Aorta (tissue), 5 donors: ENCODE measurements at regions of chr20 and their contacts with region 1.

Region 1: GRCh38 chr20:19552134-19552835 is 205.8 kb upstream of the RIN2 start:
- DNase-seq: peak; percentile 72 to 79
- ATAC-seq: peak; percentile 70
- H3K4me3 ChIP-seq: no peak overlapping the region
- H3K27ac ChIP-seq: peak overlapping the region in 1 of 2 donors; percentile 85
- H3K4me1 ChIP-seq: peaks cover 2 to 11% of the 10 kb centered on the region in 2 donors
- H3K27me3 ChIP-seq: no peaks in the 10 kb centered on the region

Region 2: GRCh38 chr20:19449051-19449450 is 103.2 kb before region 1 on chr20:
- intact Hi-C with region 1: loop called in 1 of 2 experiments (anchors 10 kb)
- DNase-seq: peak; percentile 71 to 89
- ATAC-seq: peak; percentile 5
- H3K4me3 ChIP-seq: no peak overlapping the region
- H3K27ac ChIP-seq: no peak overlapping the region
- H3K4me1 ChIP-seq: peaks cover 3 to 5% of the 10 kb centered on the region in 2 donors
- H3K27me3 ChIP-seq: no peaks in the 10 kb centered on the region

Region 3: DNA sequence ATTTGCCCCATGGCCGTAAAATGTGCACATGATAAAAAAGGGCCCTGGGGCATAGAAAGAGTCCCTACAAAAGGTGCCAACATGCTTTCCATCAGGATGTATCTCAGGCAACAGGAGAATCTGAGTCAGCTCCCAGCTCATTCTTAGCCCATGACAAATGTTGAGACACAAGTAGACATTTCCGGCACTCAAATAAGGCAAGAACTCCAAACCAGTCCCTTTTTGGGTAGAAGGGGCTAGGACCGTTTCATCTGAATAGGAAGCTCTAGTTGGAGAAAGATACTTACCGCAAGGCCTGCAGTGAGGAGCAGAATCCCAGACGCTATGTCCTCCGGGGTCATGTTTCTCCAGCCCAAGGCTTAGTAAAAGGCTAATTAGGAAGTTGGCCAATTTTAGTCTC is 55.2 kb before region 1 on chr20:
- intact Hi-C with region 1: loop called (anchors 2 to 5 kb)
- DNase-seq: no peak
- ATAC-seq: peak; percentile 49
- H3K4me3 ChIP-seq: no peak overlapping the region
- H3K27ac ChIP-seq: peak overlapping the region; percentile 91 to 96
- H3K4me1 ChIP-seq: peaks cover 9% of the 10 kb centered on the region in 2 donors
- H3K27me3 ChIP-seq: no peaks in the 10 kb centered on the region

Region 4: DNA sequence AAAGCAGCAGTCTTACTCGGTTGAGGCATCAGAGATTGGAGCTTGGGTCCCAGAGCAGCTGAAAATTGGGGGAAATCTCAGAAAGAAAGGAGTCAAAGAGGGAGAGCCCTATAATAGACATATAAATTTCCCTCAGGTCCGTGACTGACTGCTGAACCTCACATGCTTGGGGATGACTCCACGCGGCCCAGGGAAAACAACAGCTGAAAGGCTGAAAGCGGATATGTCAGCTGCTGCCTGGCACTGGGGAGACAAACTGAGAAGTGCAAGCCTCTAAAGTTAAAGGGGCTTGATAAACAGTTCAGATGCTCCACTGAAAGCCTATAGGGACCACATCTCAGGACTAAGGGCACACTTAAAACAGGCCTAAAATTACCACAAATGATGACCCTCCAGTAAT is 50.1 kb before region 1 on chr20:
- intact Hi-C with region 1: loop called (anchors 2 to 5 kb)
- DNase-seq: no peak
- ATAC-seq: no peak
- H3K4me3 ChIP-seq: no peak overlapping the region
- H3K27ac ChIP-seq: no peak overlapping the region
- H3K4me1 ChIP-seq: peaks cover 0 to 4% of the 10 kb centered on the region in 2 donors
- H3K27me3 ChIP-seq: no peaks in the 10 kb centered on the region